A549 (cell line): ENCODE measurements at regions of chr17 and their contacts with region 1.

Region 1: DNA sequence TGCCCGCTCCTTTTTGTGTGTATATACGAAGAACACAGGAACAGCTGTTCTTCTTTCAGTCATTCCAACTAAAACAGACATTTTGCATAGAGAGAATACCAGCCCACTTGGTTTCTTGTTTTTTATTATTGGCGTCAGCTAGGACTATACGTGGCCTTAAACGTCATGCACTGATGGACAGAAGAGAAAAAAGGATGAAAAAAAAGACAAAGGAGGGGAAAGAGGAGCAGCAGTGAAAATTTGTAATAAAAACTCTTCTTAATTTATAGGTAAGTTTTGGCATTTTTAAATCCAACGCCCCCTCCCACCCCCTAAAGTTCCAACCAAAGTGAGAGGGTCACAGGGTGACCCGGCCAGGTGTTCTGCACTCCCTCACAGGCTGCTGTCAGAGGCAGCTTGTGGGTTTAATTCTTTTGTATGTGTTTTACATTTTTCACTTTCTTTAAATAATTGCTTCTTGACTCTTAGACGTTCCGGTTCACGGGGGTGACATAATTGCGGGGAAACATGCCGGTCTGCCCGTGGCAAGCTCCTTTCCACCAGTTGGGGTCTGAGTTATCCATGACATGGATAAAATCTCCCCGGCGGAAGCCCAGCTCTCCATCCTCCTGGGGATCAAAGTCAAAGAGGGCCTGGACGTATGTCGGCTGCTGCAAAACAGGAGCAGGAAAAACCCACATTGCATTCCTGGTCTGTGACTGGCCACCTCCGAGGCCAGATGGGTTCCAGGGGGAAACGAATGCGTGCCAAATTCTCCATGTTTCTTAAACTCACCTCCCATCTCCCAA is 30.9 kb upstream of the SLC25A19 start:
- DNase-seq: no peak
- ATAC-seq: no peak
- H3K4me3 ChIP-seq: no peak overlapping the region
- H3K27ac ChIP-seq: no peak overlapping the region
- H3K4me1 ChIP-seq: no peaks in the 10 kb centered on the region
- CTCF ChIP-seq: no peak
- EP300 ChIP-seq: no peak
- POLR2A ChIP-seq: no peak
- RAD21 ChIP-seq: no peak

Region 2: DNA sequence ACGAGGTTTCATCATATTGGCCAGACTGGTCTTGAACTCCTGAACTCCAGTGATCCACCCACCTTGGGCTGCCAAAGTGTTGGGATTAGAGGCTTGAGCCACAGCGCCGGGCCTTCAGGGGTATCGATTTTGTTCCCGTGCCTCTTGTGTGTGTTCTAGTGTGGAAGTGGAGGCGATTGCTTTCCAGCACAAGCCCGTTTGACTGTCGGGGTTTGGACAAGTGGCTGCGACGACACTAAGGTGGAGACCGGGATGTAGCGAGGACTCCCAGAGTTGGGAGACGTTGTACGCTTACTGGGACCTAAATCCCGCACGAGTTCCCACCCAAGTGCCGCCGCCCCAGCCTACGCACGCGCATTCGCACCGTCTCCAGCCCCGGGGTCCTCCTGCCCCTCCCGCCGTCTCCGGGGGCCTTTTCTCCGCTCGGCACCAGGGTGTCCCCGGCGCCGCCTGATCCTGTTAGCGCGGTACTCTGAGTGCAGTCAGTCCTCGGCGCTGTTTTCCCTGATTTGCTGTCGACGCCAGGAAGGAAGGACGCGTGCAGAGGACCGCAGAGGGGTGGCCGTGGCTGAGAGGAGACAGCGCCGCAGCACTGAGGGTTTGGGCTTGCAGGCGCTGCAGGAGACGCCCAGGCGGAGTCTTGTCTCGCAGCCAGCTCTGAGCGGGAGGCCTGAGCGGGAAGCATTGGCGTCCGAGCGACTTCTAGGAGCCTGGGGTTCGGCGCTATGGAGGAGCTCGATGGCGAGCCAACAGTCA is 114.9 kb before region 1 on chr17 and contains the start of gene NUP85:
- CTCF ChIA-PET with region 1: no interaction called
- POLR2A ChIA-PET with region 1: no interaction called
- DNase-seq: peak; percentile 99 to 100
- ATAC-seq: peak; percentile 92 to 94
- H3K4me3 ChIP-seq: peak within 1 kb of the TSS; percentile 87
- H3K27ac ChIP-seq: peak within 1 kb of the TSS; percentile 94 to 96
- H3K4me1 ChIP-seq: peaks cover 19% of the 10 kb centered on the region; the same call in 2 of the 3 replicates
- CTCF ChIP-seq: no peak
- EP300 ChIP-seq: no peak; a peak in 1 of 5 replicates
- POLR2A ChIP-seq: peak; percentile 96
- RAD21 ChIP-seq: no peak
- polyA plus RNA-seq, gene NUP85: 110 and 124 TPM in 2 replicates

Region 3: GRCh38 chr17:75289115-75289831 is 30.8 kb before region 1 on chr17 and contains the start of gene SLC25A19:
- CTCF ChIA-PET with region 1: interaction called, 18 read pairs
- POLR2A ChIA-PET with region 1: interaction called, 6 read pairs
- DNase-seq: peak; percentile 100
- ATAC-seq: peak; percentile 97 to 99
- H3K4me3 ChIP-seq: peak within 1 kb of the TSS; percentile 72
- H3K27ac ChIP-seq: peak within 1 kb of the TSS; percentile 86 to 90
- H3K4me1 ChIP-seq: peaks cover 12% of the 10 kb centered on the region
- CTCF ChIP-seq: no peak
- EP300 ChIP-seq: no peak
- POLR2A ChIP-seq: peak; percentile 95
- RAD21 ChIP-seq: peak; percentile 15 to 22; a peak in 2 of 5 replicates
- polyA plus RNA-seq, gene SLC25A19: 14.8 and 15.3 TPM in 2 replicates

Region 4: GRCh38 chr17:75331671-75332070 is 11.6 kb after region 1 on chr17:
- CTCF ChIA-PET with region 1: interaction called, 31 read pairs
- POLR2A ChIA-PET with region 1: no interaction called
- DNase-seq: no peak
- ATAC-seq: no peak
- H3K4me3 ChIP-seq: no peak overlapping the region
- H3K27ac ChIP-seq: no peak overlapping the region
- H3K4me1 ChIP-seq: no peaks in the 10 kb centered on the region
- CTCF ChIP-seq: no peak
- EP300 ChIP-seq: no peak
- POLR2A ChIP-seq: no peak
- RAD21 ChIP-seq: no peak

Region 5: DNA sequence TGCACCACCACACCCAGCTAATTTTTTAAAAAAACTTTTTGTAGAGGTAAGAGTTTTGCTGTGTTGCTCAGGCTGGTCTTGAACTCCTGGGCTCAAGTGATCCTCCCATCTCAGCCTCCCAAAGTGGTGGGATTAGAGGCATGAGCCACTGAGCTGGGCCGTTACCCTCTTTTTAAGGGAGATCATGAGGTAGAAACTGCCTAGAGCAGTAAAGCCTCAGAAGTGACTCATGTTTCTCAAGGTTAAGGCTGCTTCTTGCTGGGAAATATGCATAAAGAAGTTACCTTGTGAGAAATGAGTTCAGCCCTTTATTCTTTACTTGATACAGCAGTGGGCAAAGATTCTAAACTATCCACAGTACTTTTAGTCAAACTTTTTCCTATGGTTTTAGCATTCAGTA is 47.2 kb after region 1 on chr17:
- CTCF ChIA-PET with region 1: interaction called, 23 read pairs
- POLR2A ChIA-PET with region 1: no interaction called
- DNase-seq: peak; percentile 30 to 40
- ATAC-seq: peak; percentile 38 to 57; a peak in 2 of 6 replicates
- H3K4me3 ChIP-seq: no peak overlapping the region
- H3K27ac ChIP-seq: 0 out of 6 replicates have a peak overlapping the region, but pooled peaks of 1 of the 2 experiments have one; percentile 0
- H3K4me1 ChIP-seq: peaks cover 65% of the 10 kb centered on the region
- CTCF ChIP-seq: no peak
- EP300 ChIP-seq: no peak
- POLR2A ChIP-seq: no peak
- RAD21 ChIP-seq: no peak

Region 6: DNA sequence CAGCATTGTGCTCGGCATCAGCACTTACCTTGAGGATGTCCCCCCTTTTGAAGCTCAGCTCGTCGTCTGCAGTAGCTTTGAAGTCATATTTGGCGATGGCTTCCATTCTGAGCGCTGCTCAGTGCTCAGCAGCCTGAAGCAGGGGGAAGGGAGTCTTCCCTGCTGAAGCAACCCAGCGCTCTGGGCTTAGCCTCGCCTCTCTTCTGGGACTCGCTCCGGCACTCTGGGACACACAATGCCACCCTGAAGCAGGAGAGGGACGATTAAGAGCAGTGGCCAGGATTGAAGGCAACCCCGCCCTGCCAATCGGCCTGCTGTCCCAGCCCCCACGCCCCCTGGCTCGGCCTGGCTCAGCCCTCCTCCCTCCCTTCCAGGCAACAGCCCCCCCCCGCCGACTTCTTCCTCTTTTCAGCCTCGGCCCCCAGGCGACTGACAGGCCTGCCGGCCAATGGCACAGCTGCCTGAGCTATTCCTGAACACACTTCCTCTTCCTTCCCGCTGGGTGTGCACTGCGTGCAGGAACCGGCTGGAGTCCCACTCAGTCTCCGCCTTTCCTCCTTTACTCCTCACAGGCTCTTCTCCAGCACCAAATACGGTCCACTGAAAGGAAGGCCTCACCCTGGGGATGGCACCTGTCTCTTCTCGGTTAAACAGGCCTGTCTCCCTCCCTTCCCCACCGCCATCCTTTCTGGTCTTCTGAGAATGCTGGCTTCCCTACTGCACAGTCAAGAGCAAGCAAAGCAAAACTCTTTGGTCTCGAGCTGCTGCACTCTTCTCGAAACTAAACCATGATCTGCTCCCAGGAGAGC is 73.6 kb after region 1 on chr17:
- CTCF ChIA-PET with region 1: interaction called, 79 read pairs
- POLR2A ChIA-PET with region 1: interaction called, 8 read pairs
- DNase-seq: peak; percentile 98 to 99
- ATAC-seq: peak; percentile 99 to 100
- H3K4me3 ChIP-seq: peak overlapping the region; percentile 62
- H3K27ac ChIP-seq: peak overlapping the region; percentile 80 to 88
- H3K4me1 ChIP-seq: peaks cover 30% of the 10 kb centered on the region
- CTCF ChIP-seq: no peak
- EP300 ChIP-seq: no peak
- POLR2A ChIP-seq: peak; percentile 79
- RAD21 ChIP-seq: 0 out of 5 replicates have a peak, but pooled peaks of 1 of the 2 experiments have one; percentile 17

Region 7: DNA sequence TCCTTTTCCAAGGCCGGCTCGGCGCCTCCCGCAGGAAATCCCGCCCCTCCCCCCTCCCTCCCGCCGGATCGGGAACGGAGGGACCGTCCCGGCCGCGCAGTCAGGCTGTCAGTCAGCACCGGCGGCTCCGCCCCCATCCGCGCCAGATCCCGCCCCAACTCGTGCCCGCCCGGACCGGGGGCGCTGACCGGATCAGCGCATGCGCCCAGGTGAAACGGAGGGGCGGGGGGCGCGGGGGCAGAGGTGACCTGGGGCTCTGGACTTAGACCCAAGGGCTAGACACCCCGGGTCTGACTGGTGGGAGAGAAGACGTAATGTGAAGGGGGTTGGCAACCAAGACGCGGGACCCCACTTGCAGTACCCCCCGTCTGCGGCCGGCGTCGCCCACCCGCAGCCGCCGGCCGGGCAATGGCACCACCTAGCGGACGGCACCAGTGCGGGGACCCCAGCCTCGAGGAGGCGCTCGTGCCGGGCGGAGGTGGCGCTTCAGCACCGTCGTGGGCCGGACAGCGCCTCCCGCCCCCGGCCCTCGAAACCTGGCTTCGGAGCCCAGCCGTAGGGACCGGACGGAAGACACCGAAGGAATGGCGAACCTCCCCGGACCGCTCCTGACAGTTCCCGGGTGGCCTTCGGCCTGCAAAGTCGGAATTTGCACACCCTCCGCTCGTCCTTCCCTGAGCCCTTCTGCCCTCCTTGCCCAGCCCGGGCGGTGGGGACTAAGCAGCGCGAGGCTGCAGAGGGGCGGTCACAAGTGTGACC is 195.6 kb after region 1 on chr17 and contains the start of gene CASKIN2:
- CTCF ChIA-PET with region 1: interaction called, 12 read pairs
- POLR2A ChIA-PET with region 1: interaction called, 3 read pairs
- DNase-seq: peak; percentile 94 to 99
- ATAC-seq: peak; percentile 69 to 85
- H3K4me3 ChIP-seq: peak within 1 kb of the TSS; percentile 89
- H3K27ac ChIP-seq: peak within 1 kb of the TSS; percentile 91 to 98
- H3K4me1 ChIP-seq: peaks cover 38% of the 10 kb centered on the region
- CTCF ChIP-seq: peak; percentile 100
- EP300 ChIP-seq: no peak
- POLR2A ChIP-seq: no peak; the same call in 1 of the 2 replicates
- RAD21 ChIP-seq: peak; percentile 81 to 95
- polyA plus RNA-seq, gene CASKIN2: 3.6 and 4.6 TPM in 2 replicates